ENCODE measurements at regions of chr11 and their contacts with region 1.

Region 1: GRCh38 chr11:119101759-119102423 is at the start of gene DPAGT1:
- DNase-seq: peak; percentile 86 to 89 (median 88)
- H3K4me3 ChIP-seq: peak within 1 kb of the TSS; percentile 87 to 98
- H3K4me3 Mint-ChIP-seq: peak within 1 kb of the TSS; percentile 93 to 99 (median 97)
- H3K27ac ChIP-seq: peak within 1 kb of the TSS; percentile 91
- H3K27ac Mint-ChIP-seq: peak within 1 kb of the TSS; percentile 93 to 100 (median 99)
- H3K4me1 ChIP-seq: peaks cover 41% of the 10 kb centered on the region
- H3K4me1 Mint-ChIP-seq: peaks cover 27 to 60% (median 43%) of the 10 kb centered on the region in 4 donors
- H3K27me3 ChIP-seq: no peaks in the 10 kb centered on the region
- H3K27me3 Mint-ChIP-seq: no peaks in the 10 kb centered on the region
- total RNA-seq, gene DPAGT1: 52.0 to 52.3 TPM

Region 2: DNA sequence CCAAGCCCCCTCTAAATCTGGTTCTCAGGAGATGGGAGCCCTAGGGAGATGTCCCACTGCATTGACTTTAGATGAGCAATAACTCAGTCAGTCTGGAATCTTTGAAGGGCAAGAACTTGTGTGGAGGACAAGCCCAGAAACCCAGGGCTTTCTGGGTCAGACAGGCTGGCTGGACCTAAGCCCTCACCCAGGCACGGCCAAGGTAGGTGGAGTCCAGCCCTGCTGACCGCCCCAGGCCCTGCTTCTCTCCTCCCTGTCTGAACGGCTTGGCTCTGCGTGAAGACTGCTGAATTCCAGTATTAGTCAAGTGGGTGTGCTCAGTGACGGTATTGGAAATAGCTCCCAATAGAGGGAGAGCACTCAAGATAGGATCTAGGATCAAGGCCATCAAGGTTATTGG is 212.1 kb before region 1 on chr11:
- CTCF ChIA-PET with region 1: no interaction called
- POLR2A ChIA-PET with region 1: no interaction called
- intact Hi-C with region 1: no loop called
- DNase-seq: peak in 1 of 5 donors; percentile 9
- H3K4me3 ChIP-seq: no peak overlapping the region
- H3K4me3 Mint-ChIP-seq: peak overlapping the region in 7 of 8 donors; percentile 36 to 91 (median 48)
- H3K27ac ChIP-seq: no peak overlapping the region
- H3K27ac Mint-ChIP-seq: peak overlapping the region; percentile 56 to 85 (median 75)
- H3K4me1 ChIP-seq: peaks cover 80% of the 10 kb centered on the region
- H3K4me1 Mint-ChIP-seq: peaks cover 60 to 94% (median 70%) of the 10 kb centered on the region in 4 donors
- H3K27me3 ChIP-seq: no peaks in the 10 kb centered on the region
- H3K27me3 Mint-ChIP-seq: no peaks in the 10 kb centered on the region

Region 3: DNA sequence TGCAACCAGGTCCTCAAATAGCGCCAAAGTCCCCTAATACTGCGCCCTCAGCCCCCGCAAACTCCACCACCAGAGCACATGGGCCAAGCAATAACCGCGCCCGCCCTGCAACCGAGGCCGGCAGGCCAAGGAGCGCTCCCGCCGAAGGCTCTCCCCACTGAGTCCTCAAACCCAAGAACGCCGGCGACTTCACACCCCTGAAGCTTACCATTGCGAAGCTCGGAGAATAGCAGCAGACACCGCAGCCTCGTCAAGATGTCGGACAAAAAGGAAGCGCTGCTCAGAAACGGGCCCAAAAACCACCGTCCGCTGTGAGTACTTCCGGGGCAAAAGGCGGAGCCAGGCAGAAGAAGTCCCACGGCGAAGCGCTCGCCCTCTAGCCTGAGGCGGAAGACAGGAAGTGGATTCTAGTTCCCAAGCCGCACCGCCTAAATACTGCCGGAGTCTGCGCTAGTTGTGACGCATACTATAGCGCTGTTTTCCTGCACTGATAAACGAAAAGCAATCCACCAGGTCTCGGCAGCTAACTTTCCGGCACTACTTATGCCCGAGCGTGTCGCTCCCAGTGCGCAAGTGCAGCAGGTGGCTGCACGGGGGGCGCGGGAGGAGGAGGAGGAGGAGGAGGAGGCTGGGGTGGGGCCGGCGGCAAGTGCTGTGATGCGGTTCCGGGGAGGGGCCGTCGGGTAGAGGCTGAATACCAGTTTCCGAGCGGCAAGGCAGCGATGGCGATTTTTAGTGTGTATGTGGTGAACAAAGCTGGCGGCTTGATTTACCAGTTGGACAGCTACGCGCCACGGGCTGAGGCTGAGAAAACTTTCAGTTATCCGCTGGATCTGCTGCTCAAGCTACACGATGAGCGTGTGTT is 83.6 kb before region 1 on chr11 and contains the starts of genes RPS25 and TRAPPC4:
- CTCF ChIA-PET with region 1: interaction called, 5 read pairs
- POLR2A ChIA-PET with region 1: interaction called, 31 read pairs
- intact Hi-C with region 1: no loop called
- DNase-seq: peak; percentile 96 to 98 (median 97)
- H3K4me3 ChIP-seq: peak within 1 kb of the TSS; percentile 71 to 96
- H3K4me3 Mint-ChIP-seq: peak within 1 kb of the TSS; percentile 94 to 100 (median 99)
- H3K27ac ChIP-seq: peak within 1 kb of the TSS; percentile 87
- H3K27ac Mint-ChIP-seq: peak within 1 kb of the TSS; percentile 98 to 100 (median 100)
- H3K4me1 ChIP-seq: peaks cover 52% of the 10 kb centered on the region
- H3K4me1 Mint-ChIP-seq: peaks cover 21 to 73% (median 51%) of the 10 kb centered on the region in 4 donors
- H3K27me3 ChIP-seq: no peaks in the 10 kb centered on the region
- H3K27me3 Mint-ChIP-seq: no peaks in the 10 kb centered on the region
- total RNA-seq, gene RPS25: 2,545 to 2,705 TPM
- total RNA-seq, gene TRAPPC4: 89.2 to 97.3 TPM

Region 4: GRCh38 chr11:119044708-119045107 is 57.2 kb before region 1 on chr11:
- CTCF ChIA-PET with region 1: no interaction called
- POLR2A ChIA-PET with region 1: no interaction called
- intact Hi-C with region 1: no loop called
- DNase-seq: no peak
- H3K4me3 ChIP-seq: no peak overlapping the region
- H3K4me3 Mint-ChIP-seq: no peak overlapping the region
- H3K27ac ChIP-seq: no peak overlapping the region
- H3K27ac Mint-ChIP-seq: peak overlapping the region in 2 of 7 donors; percentile 36 to 86
- H3K4me1 ChIP-seq: no peaks in the 10 kb centered on the region
- H3K4me1 Mint-ChIP-seq: peaks cover 0 to 5% (median 2%) of the 10 kb centered on the region in 4 donors
- H3K27me3 ChIP-seq: no peaks in the 10 kb centered on the region
- H3K27me3 Mint-ChIP-seq: peaks cover 0 to 2% of the 10 kb centered on the region in 2 donors

Region 5: DNA sequence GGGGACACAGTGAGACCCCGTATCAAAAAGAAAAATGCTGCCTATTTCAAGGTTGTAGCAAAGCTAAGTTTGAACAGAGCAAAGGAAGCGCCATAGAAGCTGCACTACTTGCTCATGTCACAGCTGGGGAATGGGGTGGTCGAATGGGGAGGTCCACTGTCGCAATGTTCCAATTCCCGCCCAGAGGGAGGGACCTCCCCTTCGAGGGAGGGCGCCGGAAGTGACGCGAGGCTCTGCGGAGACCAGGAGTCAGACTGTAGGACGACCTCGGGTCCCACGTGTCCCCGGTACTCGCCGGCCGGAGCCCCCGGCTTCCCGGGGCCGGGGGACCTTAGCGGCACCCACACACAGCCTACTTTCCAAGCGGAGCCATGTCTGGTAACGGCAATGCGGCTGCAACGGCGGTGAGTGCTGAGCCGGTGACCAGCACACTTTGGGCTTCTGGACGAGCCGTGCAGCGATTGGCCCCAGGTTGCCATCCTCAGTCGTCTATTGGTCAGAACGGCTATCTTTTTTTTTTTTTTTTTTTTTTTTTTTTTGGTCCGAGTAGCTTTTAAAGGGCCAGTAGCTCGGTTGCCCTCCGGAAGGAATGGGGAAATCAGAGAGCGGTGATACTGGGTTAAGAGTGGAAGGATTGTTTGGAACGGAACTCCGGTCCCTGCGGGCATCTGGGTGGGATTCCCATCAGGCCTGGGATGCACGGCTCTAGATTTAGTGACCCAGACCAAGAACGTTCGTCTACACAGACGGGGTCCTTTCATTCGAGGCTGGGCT is 17.0 kb before region 1 on chr11 and contains the start of gene HMBS:
- CTCF ChIA-PET with region 1: interaction called, 4 read pairs
- POLR2A ChIA-PET with region 1: interaction called, 35 read pairs
- intact Hi-C with region 1: loop called (anchors 1 kb)
- DNase-seq: peak; percentile 88 to 93 (median 89)
- H3K4me3 ChIP-seq: peak within 1 kb of the TSS; percentile 83 to 90
- H3K4me3 Mint-ChIP-seq: peak within 1 kb of the TSS; percentile 92 to 96 (median 94)
- H3K27ac ChIP-seq: peak within 1 kb of the TSS; percentile 76
- H3K27ac Mint-ChIP-seq: peak within 1 kb of the TSS; percentile 93 to 98 (median 96)
- H3K4me1 ChIP-seq: peaks cover 13% of the 10 kb centered on the region
- H3K4me1 Mint-ChIP-seq: peaks cover 9 to 19% (median 14%) of the 10 kb centered on the region in 4 donors
- H3K27me3 ChIP-seq: no peaks in the 10 kb centered on the region
- H3K27me3 Mint-ChIP-seq: no peaks in the 10 kb centered on the region
- total RNA-seq, gene HMBS: 5.1 to 5.8 TPM

Region 6: DNA sequence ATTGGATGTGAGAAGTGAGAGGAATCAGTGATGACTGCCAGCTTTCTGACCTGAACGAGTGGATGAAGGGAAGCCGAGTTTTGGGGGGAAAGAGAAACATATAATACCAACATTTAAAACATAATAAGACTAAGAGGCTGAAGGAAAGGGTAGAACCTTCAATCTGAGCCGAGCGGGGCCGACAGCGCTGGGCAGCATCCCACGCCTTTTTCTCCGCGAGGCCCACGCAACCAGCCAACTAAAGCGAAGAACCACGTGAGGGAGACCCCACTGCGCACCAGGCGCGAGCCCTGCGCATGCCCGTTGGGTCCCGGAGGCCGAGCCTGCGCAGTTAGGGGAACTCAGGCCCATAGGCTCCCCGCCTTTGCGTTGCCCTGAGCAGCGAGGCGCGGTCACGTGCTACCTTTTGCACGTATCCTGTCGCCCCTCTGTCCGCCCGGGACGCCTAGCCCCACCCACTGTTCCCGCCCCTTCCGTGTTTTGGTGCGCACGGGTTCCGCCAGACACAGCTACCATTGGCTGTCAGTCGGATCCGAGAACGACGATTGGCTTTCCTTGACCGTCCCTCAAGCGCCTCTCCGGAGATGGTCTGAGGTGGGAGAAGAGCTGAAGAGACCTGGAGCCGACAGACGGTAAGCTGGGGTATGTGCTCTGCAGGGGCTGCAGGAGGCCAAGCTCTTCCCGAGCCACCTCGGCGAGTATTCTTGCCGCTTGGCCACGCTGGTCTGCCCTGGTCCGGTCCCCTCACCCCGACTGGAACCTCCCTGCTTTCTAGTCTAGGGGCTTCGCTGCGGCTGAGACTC is 19.3 kb after region 1 on chr11 and contains the start of gene HINFP:
- CTCF ChIA-PET with region 1: interaction called, 11 read pairs
- POLR2A ChIA-PET with region 1: interaction called, 118 read pairs
- intact Hi-C with region 1: loop called (anchors 1 kb)
- DNase-seq: peak; percentile 97 to 100 (median 99)
- H3K4me3 ChIP-seq: peak within 1 kb of the TSS; percentile 78 to 90
- H3K4me3 Mint-ChIP-seq: peak within 1 kb of the TSS; percentile 88 to 99 (median 95)
- H3K27ac ChIP-seq: peak within 1 kb of the TSS; percentile 85
- H3K27ac Mint-ChIP-seq: peak within 1 kb of the TSS; percentile 90 to 98 (median 94)
- H3K4me1 ChIP-seq: peaks cover 33% of the 10 kb centered on the region
- H3K4me1 Mint-ChIP-seq: peaks cover 24 to 51% (median 28%) of the 10 kb centered on the region in 4 donors
- H3K27me3 ChIP-seq: no peaks in the 10 kb centered on the region
- H3K27me3 Mint-ChIP-seq: no peaks in the 10 kb centered on the region
- total RNA-seq, gene HINFP: 70.8 to 75.3 TPM

Region 7: GRCh38 chr11:119196833-119197483 is 95.1 kb after region 1 on chr11:
- CTCF ChIA-PET with region 1: interaction called, 8 read pairs
- POLR2A ChIA-PET with region 1: interaction called, 4 read pairs
- intact Hi-C with region 1: loop called (anchors 2 kb)
- DNase-seq: peak; percentile 73 to 79 (median 76)
- H3K4me3 ChIP-seq: no peak overlapping the region
- H3K4me3 Mint-ChIP-seq: peak overlapping the region in 1 of 8 donors; percentile 47
- H3K27ac ChIP-seq: no peak overlapping the region
- H3K27ac Mint-ChIP-seq: peak overlapping the region in 1 of 7 donors; percentile 43
- H3K4me1 ChIP-seq: no peaks in the 10 kb centered on the region
- H3K4me1 Mint-ChIP-seq: peaks cover 0 to 6% (median 3%) of the 10 kb centered on the region in 4 donors
- H3K27me3 ChIP-seq: no peaks in the 10 kb centered on the region
- H3K27me3 Mint-ChIP-seq: peaks cover 0 to 1% of the 10 kb centered on the region in 2 donors

Region 8: DNA sequence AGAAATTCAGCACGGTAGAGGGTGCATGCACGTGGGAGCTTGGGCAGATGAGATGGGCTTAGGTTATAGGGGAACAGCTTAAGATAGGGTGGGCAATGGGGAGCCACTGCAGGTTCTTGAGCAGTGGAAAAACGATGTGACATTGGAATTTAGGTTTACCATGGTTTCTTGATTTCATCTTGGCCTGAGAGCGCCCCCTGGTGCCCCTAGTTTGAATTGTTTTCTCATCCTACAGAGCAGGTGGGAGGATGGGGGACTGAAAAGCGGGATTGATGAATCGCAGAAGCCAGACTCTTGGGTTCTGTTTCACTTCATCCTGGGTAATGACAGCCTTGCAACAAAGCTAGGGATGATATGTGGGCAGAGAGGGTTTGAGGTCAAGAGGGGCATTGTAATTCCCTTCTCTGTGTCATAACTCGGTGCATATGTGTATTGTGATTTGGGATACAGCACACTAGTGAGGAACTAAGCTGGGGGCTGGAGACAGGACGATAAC is 221.7 kb after region 1 on chr11:
- CTCF ChIA-PET with region 1: interaction called, 4 read pairs
- POLR2A ChIA-PET with region 1: no interaction called
- intact Hi-C with region 1: loop called (anchors 5 kb)
- DNase-seq: peak; percentile 69 to 80 (median 74)
- H3K4me3 ChIP-seq: no peak overlapping the region
- H3K4me3 Mint-ChIP-seq: peak overlapping the region in 4 of 8 donors; percentile 15 to 68 (median 40)
- H3K27ac ChIP-seq: no peak overlapping the region
- H3K27ac Mint-ChIP-seq: peak overlapping the region in 3 of 7 donors; percentile 38 to 82 (median 47)
- H3K4me1 ChIP-seq: peaks cover 40% of the 10 kb centered on the region
- H3K4me1 Mint-ChIP-seq: peaks cover 15 to 34% (median 24%) of the 10 kb centered on the region in 4 donors
- H3K27me3 ChIP-seq: no peaks in the 10 kb centered on the region
- H3K27me3 Mint-ChIP-seq: peaks cover 0 to 5% of the 10 kb centered on the region in 2 donors